ENCODE measurements at regions of chr22 and their contacts with region 1.

Region 1: DNA sequence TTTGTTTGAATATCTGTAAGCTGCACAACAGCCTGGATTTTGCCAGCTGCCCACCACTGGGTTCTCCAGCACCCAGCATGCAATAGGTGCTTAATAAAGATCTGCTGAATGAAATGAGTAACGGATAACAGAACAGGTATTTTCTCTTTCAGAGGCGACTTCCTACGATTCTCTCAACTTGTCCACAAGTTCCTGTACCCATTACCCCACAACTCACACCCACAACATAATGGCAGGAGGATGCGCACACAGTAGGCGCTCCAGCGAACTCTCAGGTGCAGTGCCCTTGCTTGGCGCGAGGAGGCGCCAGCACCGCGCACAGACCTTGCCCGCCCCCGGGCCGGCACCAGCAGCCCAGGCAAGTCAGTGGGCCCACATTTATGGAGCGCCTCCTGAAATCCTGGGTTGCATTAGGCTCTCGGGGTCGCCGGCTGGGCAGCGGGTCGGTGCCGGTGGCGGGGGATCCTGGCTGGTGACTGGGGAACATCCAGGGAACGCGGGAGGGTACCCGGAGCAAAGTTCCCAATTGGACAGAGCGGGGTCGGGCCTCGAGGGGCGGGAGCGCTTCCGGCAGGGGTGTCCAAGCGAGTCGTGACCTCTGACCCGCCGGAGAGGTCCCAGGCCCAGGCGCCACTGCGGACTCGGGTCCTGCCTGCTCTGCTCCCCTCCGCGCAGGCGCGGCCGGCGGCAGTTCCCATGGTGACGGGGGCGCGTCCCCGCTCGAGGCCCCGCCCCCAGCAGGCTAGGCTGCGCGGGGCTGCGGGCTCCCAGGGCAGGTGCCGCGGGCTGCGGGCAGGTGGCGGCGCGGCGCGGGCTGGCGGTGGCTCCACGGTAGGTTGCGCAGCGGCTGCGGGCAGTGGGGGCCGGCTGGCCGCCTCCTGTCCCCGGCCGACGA is at the start of gene KIAA1671:
- DNase-seq: peak; percentile 93 to 97
- H3K4me3 ChIP-seq: peak within 1 kb of the TSS; percentile 96
- H3K4me3 Mint-ChIP-seq: peak within 1 kb of the TSS; percentile 99
- H3K27ac Mint-ChIP-seq: peak within 1 kb of the TSS; percentile 99
- H3K4me1 ChIP-seq: peaks cover 16% of the 10 kb centered on the region
- H3K4me1 Mint-ChIP-seq: peaks cover 8% of the 10 kb centered on the region
- H3K27me3 ChIP-seq: no peaks in the 10 kb centered on the region
- H3K27me3 Mint-ChIP-seq: no peaks in the 10 kb centered on the region
- CTCF ChIP-seq: peak; percentile 84 to 86
- total RNA-seq, gene KIAA1671: 28.6 and 34.7 TPM in 2 replicates

Region 2: GRCh38 chr22:25027959-25028840 is 76.0 kb after region 1 on chr22:
- CTCF ChIA-PET with region 1: no interaction called
- POLR2A ChIA-PET with region 1: no interaction called
- intact Hi-C with region 1: loop called (anchors 5 kb)
- DNase-seq: peak in 1 of 2 experiments; percentile 33
- H3K4me3 ChIP-seq: no peak overlapping the region
- H3K4me3 Mint-ChIP-seq: no peak overlapping the region
- H3K27ac Mint-ChIP-seq: peak overlapping the region; percentile 64
- H3K4me1 ChIP-seq: peaks cover 22% of the 10 kb centered on the region
- H3K4me1 Mint-ChIP-seq: peaks cover 19% of the 10 kb centered on the region
- H3K27me3 ChIP-seq: no peaks in the 10 kb centered on the region
- H3K27me3 Mint-ChIP-seq: no peaks in the 10 kb centered on the region
- CTCF ChIP-seq: peak; percentile 19 to 44

Region 3: GRCh38 chr22:25048659-25049647 is 96.8 kb after region 1 on chr22:
- CTCF ChIA-PET with region 1: interaction called, 9 read pairs
- POLR2A ChIA-PET with region 1: interaction called, 3 read pairs
- intact Hi-C with region 1: loop called (anchors 1 kb)
- DNase-seq: peak; percentile 63 to 72
- H3K4me3 ChIP-seq: no peak overlapping the region
- H3K4me3 Mint-ChIP-seq: no peak overlapping the region
- H3K27ac Mint-ChIP-seq: no peak overlapping the region
- H3K4me1 ChIP-seq: peaks cover 24% of the 10 kb centered on the region
- H3K4me1 Mint-ChIP-seq: peaks cover 10% of the 10 kb centered on the region
- H3K27me3 ChIP-seq: no peaks in the 10 kb centered on the region
- H3K27me3 Mint-ChIP-seq: no peaks in the 10 kb centered on the region
- CTCF ChIP-seq: peak; percentile 82 to 88

Measured in Caco-2 (cell line).